ENCODE measurements at regions of chr19 and their contacts with region 1.

Region 1: GRCh38 chr19:13044231-13044836 is 49.1 kb downstream of the NFIX start:
- DNase-seq: peak; percentile 75
- H3K4me3 ChIP-seq: no peak overlapping the region
- H3K27ac ChIP-seq: no peak overlapping the region
- H3K4me1 ChIP-seq: peaks cover 34% of the 10 kb centered on the region
- H3K27me3 ChIP-seq: no peaks in the 10 kb centered on the region
- CTCF ChIP-seq: no peak

Region 2: DNA sequence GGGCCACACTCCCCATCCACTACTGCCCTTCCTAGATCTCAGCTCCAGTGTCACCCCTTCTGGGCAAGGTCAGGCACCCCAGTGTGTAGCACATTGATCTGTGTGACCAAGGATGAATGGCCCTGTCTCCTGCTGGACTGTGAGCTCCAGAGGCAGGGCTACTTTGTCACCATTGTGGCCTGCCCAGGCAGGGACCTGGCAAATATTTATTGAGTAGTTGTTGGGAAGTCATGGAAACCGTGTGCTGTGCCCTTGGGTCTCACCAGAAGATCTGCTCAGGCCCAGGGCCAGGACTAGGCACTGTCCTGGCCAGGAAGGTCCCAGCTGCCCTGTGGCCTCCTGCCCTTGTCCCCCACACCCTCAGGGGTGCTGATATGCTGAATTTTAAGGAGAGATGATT is 84.2 kb after region 1 on chr19:
- CTCF ChIA-PET with region 1: no interaction called
- dilution Hi-C with region 1: loop called (anchors 5 kb)
- in situ Hi-C with region 1: no loop called
- intact Hi-C with region 1: no loop called
- DNase-seq: no peak
- H3K4me3 ChIP-seq: no peak overlapping the region
- H3K27ac ChIP-seq: no peak overlapping the region
- H3K4me1 ChIP-seq: peaks cover 9% of the 10 kb centered on the region
- H3K27me3 ChIP-seq: no peaks in the 10 kb centered on the region
- CTCF ChIP-seq: no peak